ENCODE measurements at regions of chr1 and their contacts with region 1.

Region 1: DNA sequence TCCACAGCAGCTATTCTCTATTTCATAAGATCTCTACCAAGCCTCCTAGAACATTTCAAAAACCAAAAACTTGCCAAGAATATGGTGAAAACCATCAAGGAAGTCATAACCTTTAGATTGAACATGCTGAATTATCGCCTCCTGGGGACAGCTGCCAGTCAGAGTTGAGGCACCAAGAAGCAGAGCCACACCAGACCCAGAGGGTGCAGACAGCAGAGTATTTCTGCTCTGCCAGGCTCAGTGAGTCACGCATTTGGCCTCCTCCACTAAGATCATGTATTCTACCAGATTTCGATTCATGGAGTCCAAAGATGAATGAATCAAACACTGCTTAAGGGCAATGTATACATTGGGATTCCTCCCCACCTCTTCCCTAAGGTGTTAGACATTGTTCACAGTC is 2.1 kb downstream of the F3 start:
- DNase-seq: peak; percentile 30
- ATAC-seq: peak; percentile 11 to 40

Region 2: GRCh38 chr1:94463765-94464330 is 75.6 kb before region 1 on chr1:
- intact Hi-C with region 1: no loop called
- DNase-seq: no peak
- ATAC-seq: peak in 1 of 2 donors; percentile 67

Region 3: GRCh38 chr1:94599095-94599813 is 59.8 kb after region 1 on chr1:
- intact Hi-C with region 1: loop called in 1 of 2 experiments (anchors 5 kb)
- DNase-seq: no peak
- ATAC-seq: peak; percentile 70 to 86

Region 4: GRCh38 chr1:94622757-94623156 is 83.3 kb after region 1 on chr1:
- intact Hi-C with region 1: no loop called
- DNase-seq: no peak
- ATAC-seq: no peak

Region 5: DNA sequence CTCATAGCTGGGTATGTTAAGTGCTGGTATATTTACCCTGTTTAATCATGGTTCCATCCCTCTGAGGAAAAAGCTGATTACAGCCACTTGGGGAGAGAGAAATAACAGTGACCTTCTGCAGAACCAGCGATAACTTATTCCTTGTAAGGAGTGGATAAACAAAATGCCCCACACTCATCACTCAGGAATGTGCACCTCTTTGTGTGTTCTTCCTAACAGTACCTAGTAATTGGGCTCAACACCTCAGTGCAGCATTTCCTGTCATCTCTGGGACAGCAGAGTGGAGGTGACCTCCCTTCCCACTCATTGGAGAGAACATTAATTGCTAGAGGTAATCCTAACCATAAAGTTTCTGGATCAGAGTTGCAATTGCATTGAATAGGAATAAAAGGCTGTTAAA is 114.5 kb after region 1 on chr1:
- intact Hi-C with region 1: loop called (anchors 5 to 10 kb)
- DNase-seq: no peak
- ATAC-seq: peak; percentile 31 to 34

Measured in left cardiac atrium (tissue), 4 donors.